ENCODE measurements at regions of chr2 and their contacts with region 1.

Region 1: GRCh38 chr2:25903216-25903776 is 25.0 kb upstream of the ASXL2 start:
- DNase-seq: no peak
- H3K4me3 ChIP-seq: no peak overlapping the region
- H3K27ac ChIP-seq: no peak overlapping the region
- H3K4me1 ChIP-seq: no peaks in the 10 kb centered on the region
- H3K27me3 ChIP-seq: no peaks in the 10 kb centered on the region
- CTCF ChIP-seq: no peak
- POLR2A ChIP-seq: no peak

Region 2: GRCh38 chr2:25844089-25844488 is 59.2 kb before region 1 on chr2:
- intact Hi-C with region 1: no loop called
- DNase-seq: no peak
- H3K4me3 ChIP-seq: no peak overlapping the region
- H3K27ac ChIP-seq: no peak overlapping the region
- H3K4me1 ChIP-seq: no peaks in the 10 kb centered on the region
- H3K27me3 ChIP-seq: no peaks in the 10 kb centered on the region
- CTCF ChIP-seq: no peak
- POLR2A ChIP-seq: no peak

Region 3: DNA sequence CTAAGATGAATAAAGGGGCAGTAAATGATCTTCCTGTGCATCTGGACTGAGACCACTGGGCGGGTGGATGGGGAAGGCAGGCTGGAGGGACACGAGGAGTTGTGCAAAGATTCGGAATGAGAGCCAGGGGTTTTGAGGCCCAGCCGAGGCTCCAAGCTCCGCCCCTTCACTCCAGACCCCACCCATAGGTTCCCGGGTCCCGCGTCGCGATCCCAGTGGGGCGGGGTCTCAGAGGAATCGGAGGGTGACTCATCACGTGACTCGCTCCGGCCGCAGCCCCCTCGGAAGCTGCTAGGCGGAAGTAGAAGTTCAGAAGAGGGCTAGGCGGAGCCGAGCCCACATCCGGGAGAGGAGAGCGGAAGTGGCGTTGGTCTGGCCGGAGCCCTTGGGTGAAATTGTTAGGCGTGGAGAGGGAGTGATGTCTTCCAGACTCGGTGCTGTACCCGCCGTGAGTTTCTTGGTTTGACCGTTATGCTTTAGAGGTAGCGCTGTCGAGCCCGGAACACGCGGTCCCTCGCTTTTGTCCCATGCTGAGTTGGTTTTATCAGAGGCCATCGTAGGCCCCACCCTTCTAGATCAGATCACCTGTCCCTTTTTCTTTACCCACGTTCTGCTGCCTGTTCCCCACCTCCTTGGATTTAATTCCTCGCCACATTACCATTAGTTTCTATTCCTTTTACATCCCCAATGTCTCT is 1679.5 kb after region 1 on chr2 and contains the start of gene ZNF512:
- intact Hi-C with region 1: loop called (anchors 5 kb)
- DNase-seq: peak; percentile 75 to 85
- H3K4me3 ChIP-seq: peak within 1 kb of the TSS; percentile 65 to 73 (median 70)
- H3K27ac ChIP-seq: peak within 1 kb of the TSS; percentile 74 to 78
- H3K4me1 ChIP-seq: no peaks in the 10 kb centered on the region
- H3K27me3 ChIP-seq: no peaks in the 10 kb centered on the region
- CTCF ChIP-seq: peak in 1 of 3 donors; percentile 20
- POLR2A ChIP-seq: no peak
- total RNA-seq, gene ZNF512: 28.8 to 42.7 (median 39.7) TPM